GM13976 (cell line): ENCODE measurements at regions of chr12 and their contacts with region 1.

Region 1: DNA sequence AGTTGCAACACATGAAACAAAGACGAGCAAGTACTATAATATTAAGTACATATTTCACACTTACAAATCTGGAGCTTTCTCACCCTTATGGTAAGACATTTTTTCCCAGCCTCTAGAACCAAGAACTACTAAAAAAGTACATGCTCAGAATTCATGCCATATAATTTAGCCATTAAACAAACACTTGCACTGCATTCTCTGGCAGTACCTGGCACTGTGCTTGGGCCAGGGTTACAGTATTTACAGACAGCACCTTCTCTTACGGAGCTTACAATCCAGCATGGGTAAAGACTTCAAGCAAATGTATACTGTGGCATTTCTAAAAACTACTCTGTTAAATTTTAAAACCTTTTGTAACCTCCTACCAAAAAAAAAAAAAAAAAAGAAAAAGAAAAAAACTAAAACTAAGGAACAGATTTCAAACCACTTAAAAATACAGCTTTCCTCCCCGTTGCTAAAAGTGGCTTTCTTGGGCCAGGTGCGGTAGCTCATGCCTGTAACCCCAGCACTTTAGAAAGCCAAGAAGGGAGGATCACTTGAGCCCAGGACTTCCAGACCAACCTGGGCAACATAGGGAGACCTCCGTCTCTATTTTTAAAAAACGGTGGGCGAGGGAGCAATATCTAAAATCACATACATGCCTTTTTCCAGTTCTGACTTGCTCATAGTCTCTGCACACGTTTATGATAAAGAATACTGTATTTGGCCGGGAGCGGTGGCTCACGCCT is 956 bp downstream of the GNPTAB start:
- DNase-seq: no peak
- CTCF ChIP-seq: no peak

Region 2: DNA sequence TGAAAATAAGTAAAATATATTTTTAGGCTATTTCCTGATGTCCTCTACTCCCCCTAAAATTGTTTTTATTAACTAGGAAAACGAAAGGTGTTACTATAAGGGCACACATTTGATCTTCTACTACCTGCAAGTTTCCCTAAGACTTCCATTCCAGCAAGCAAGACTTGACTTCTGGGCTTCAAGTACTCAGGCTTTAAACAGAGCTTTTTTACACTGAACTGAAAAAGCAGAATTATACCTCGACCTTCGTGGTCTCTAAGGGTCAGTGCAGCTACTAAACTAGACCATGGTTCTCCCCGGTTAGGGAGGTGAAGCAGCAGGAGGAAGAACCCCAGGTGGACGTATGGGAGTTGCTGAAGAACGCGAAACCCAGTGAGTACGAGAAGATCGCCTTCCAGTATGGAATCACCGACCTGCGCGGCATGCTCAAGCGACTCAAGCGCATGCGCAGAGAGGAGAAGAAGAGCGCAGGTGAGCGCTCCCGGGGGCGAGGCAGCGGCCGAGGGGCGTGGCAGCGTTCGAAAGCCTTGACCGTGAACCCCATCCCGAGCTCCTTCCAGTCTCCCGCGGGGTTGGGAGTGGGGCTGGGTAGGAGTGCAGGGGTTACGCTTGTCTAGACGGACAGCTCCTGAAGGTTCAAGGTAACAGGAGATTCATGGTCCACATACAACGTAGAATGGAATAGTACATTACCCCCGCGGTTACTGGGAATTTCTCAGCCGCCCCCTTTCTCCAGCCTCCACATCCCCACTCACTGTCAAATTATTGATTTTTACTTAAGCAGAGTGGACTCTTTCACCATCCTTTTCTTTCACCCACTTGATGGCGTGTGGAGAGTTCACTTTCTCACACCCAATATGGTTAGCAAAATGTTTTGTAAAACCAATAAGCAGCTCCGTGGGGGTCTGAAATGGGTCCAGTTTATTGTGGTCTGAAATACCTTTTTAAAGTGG is 187.4 kb before region 1 on chr12:
- in situ Hi-C with region 1: no loop called
- DNase-seq: peak; percentile 8
- CTCF ChIP-seq: no peak

Region 3: GRCh38 chr12:101782273-101782731 is 47.5 kb before region 1 on chr12:
- in situ Hi-C with region 1: loop called (anchors 5 kb)
- DNase-seq: no peak
- CTCF ChIP-seq: no peak

Region 4: GRCh38 chr12:101962486-101962885 is 132.7 kb after region 1 on chr12:
- in situ Hi-C with region 1: no loop called
- DNase-seq: no peak
- CTCF ChIP-seq: no peak